ENCODE measurements at regions of chr1 and their contacts with region 1.

Region 1: GRCh38 chr1:2556277-2556677 is at the start of gene TNFRSF14:
- DNase-seq: peak; percentile 50 to 92 (median 72)
- ATAC-seq: peak; percentile 75
- H3K4me3 ChIP-seq: peak within 1 kb of the TSS; percentile 67 to 99
- H3K4me3 Mint-ChIP-seq: peak within 1 kb of the TSS; percentile 99
- H3K27ac ChIP-seq: peak within 1 kb of the TSS; percentile 89 to 98
- H3K27ac Mint-ChIP-seq: peak within 1 kb of the TSS; percentile 99
- H3K4me1 ChIP-seq: peaks cover 37% of the 10 kb centered on the region
- H3K4me1 Mint-ChIP-seq: peaks cover 42% of the 10 kb centered on the region
- H3K27me3 ChIP-seq: no peaks in the 10 kb centered on the region
- H3K27me3 Mint-ChIP-seq: no peaks in the 10 kb centered on the region
- CTCF ChIP-seq: peak; percentile 19
- total RNA-seq, gene TNFRSF14: 158 to 160 TPM

Region 2: DNA sequence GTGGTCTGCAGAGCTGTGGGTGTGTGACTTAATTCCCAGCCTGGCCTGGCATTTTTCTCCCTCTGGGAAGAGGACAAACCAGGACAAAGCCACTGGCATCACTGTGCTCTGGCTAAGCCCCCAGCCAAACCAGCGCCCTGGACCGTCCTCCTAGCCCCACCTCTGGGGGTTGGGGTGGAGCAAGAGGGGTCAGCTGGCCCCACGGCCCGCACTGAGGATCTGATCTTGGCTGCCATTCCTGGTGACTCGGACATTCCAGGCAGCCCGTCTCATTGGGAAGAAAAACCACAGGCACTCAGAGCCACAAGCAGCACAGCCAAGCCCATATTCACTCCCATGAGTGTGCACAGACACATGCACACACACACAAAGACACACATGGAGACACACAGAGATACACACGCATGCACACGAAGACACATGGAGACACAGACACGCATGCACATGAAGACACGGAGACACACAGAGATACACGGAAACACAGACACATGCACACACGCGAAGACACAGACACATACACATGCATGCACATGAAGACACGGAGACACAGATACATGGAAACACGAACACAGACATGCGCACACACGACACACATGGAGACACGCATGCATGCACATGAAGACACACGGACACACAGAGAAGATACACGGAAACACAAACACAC is 1195.6 kb before region 1 on chr1:
- CTCF ChIA-PET with region 1: no interaction called
- POLR2A ChIA-PET with region 1: no interaction called
- intact Hi-C with region 1: no loop called
- DNase-seq: no peak
- ATAC-seq: no peak
- H3K4me3 ChIP-seq: no peak overlapping the region
- H3K4me3 Mint-ChIP-seq: no peak overlapping the region
- H3K27ac ChIP-seq: no peak overlapping the region
- H3K27ac Mint-ChIP-seq: no peak overlapping the region
- H3K4me1 ChIP-seq: peaks cover 27% of the 10 kb centered on the region
- H3K4me1 Mint-ChIP-seq: peaks cover 24% of the 10 kb centered on the region
- H3K27me3 ChIP-seq: peaks cover 0 to 20% of the 10 kb centered on the region in 2 experiments
- H3K27me3 Mint-ChIP-seq: peaks cover 6% of the 10 kb centered on the region
- CTCF ChIP-seq: no peak

Region 3: GRCh38 chr1:2049718-2050427 is 506.4 kb before region 1 on chr1 and contains the start of gene PRKCZ:
- CTCF ChIA-PET with region 1: no interaction called
- POLR2A ChIA-PET with region 1: no interaction called
- intact Hi-C with region 1: loop called in 1 of 2 experiments (anchors 10 kb)
- DNase-seq: peak; percentile 90 to 98 (median 95)
- ATAC-seq: peak; percentile 97
- H3K4me3 ChIP-seq: peak within 1 kb of the TSS; percentile 76 to 88
- H3K4me3 Mint-ChIP-seq: peak within 1 kb of the TSS; percentile 80
- H3K27ac ChIP-seq: peak within 1 kb of the TSS; percentile 33 to 64
- H3K27ac Mint-ChIP-seq: no peak within 1 kb of the TSS
- H3K4me1 ChIP-seq: peaks cover 30% of the 10 kb centered on the region
- H3K4me1 Mint-ChIP-seq: peaks cover 28% of the 10 kb centered on the region
- H3K27me3 ChIP-seq: peaks cover 0 to 5% of the 10 kb centered on the region in 2 experiments
- H3K27me3 Mint-ChIP-seq: no peaks in the 10 kb centered on the region
- CTCF ChIP-seq: no peak
- total RNA-seq, gene PRKCZ: 17.1 to 19.6 TPM

Region 4: DNA sequence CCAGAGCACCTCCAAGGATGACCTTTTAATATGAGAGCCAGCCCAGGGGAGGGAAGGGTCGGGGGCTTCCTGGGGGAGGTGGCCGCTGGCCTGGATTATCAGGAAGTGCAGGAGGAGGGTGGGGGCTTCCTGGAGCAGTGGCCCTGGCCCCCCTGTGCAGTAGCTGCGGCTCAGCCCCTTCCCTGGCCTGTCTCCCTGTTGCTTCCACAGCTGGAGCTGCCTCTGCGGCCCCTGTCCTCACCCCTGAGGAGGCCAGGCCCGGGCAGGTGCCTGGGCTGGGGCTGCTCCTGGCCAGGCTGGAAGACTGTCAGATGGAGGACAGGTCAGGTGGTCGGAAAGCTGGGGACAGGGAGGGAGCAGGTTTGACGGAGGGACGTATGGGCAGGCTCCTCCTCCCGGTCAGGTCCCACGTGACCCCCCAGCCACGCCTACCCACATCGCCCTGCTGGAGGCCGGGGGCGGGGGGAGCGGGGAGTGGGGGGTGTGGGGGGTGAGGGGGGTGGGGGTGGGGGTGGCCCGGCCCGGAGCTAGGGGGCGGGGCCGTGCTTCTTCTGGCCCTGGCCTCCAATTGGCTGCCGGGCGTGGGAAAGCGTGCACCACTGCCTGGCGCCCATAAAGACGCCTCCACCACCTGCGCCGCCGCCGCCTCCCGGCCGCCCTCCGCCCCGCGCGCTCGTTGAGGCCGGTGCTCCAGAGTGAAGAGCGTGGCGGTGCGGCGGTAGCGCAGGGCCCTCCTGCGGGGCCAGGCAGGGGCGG is 10.3 kb before region 1 on chr1:
- CTCF ChIA-PET with region 1: interaction called, 17 read pairs
- POLR2A ChIA-PET with region 1: interaction called, 9 read pairs
- intact Hi-C with region 1: loop called in 1 of 2 experiments (anchors 1 kb)
- DNase-seq: peak; percentile 85 to 96 (median 89)
- ATAC-seq: peak; percentile 42
- H3K4me3 ChIP-seq: peak overlapping the region; percentile 87 to 91
- H3K4me3 Mint-ChIP-seq: peak overlapping the region; percentile 91
- H3K27ac ChIP-seq: peak overlapping the region; percentile 79 to 99
- H3K27ac Mint-ChIP-seq: peak overlapping the region; percentile 96
- H3K4me1 ChIP-seq: peaks cover 40% of the 10 kb centered on the region
- H3K4me1 Mint-ChIP-seq: peaks cover 31% of the 10 kb centered on the region
- H3K27me3 ChIP-seq: no peaks in the 10 kb centered on the region
- H3K27me3 Mint-ChIP-seq: no peaks in the 10 kb centered on the region
- CTCF ChIP-seq: no peak

Region 5: GRCh38 chr1:2586154-2587070 is 30.1 kb after region 1 on chr1 and contains the start of gene PRXL2B:
- CTCF ChIA-PET with region 1: interaction called, 28 read pairs
- POLR2A ChIA-PET with region 1: interaction called, 98 read pairs
- intact Hi-C with region 1: loop called (anchors 1 kb)
- DNase-seq: peak; percentile 94 to 99 (median 97)
- ATAC-seq: peak; percentile 69
- H3K4me3 ChIP-seq: peak within 1 kb of the TSS; percentile 79 to 95
- H3K4me3 Mint-ChIP-seq: peak within 1 kb of the TSS; percentile 93
- H3K27ac ChIP-seq: peak within 1 kb of the TSS; percentile 95 to 98
- H3K27ac Mint-ChIP-seq: peak within 1 kb of the TSS; percentile 99
- H3K4me1 ChIP-seq: peaks cover 37% of the 10 kb centered on the region
- H3K4me1 Mint-ChIP-seq: peaks cover 40% of the 10 kb centered on the region
- H3K27me3 ChIP-seq: no peaks in the 10 kb centered on the region
- H3K27me3 Mint-ChIP-seq: no peaks in the 10 kb centered on the region
- CTCF ChIP-seq: no peak
- total RNA-seq, gene PRXL2B: 13.5 to 15.9 TPM

Region 6: DNA sequence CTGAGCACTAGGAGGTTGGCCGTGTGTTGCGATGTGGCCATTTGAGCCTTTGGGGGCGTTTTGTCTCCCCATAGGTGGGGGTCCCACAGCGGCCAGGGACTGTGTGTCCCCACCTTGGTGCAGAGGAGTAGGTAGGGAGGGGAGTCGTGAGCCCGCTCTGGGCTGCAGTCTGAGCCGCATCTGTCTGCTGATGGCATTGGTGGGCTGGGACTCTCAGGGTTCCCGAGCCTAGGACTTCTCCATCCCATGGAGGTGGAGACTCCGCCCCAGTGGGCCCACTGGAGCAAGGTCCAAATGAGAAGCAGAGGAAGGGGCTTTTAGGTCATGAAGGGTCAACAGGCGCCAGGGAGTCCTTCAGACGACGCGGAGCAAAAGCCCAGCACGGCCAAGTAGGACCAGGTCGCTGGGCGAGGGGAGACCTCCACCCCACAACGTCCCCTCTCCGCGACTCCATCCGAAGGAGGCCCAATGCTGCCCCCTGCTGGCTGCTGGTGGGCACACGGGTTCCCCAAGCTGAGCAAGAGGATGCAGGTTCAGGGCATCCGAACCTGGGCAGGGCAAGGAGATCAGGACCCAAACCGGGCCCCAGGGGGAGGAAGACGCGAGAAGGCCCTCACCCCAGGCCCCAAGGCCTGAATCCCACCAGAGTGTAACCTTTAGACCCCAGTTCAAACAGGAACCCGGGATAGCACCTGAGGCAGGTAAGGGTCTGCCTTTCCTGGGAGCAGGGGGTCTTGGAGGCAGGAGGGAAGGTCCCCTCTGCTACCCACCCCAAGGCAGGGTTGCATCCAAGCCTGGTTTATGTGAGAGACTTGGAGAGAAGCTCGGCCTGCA is 230.3 kb after region 1 on chr1:
- CTCF ChIA-PET with region 1: interaction called, 4 read pairs
- POLR2A ChIA-PET with region 1: no interaction called
- intact Hi-C with region 1: loop called in 1 of 2 experiments (anchors 1 kb)
- DNase-seq: peak; percentile 52 to 87 (median 74)
- ATAC-seq: peak; percentile 69
- H3K4me3 ChIP-seq: no peak overlapping the region
- H3K4me3 Mint-ChIP-seq: no peak overlapping the region
- H3K27ac ChIP-seq: no peak overlapping the region
- H3K27ac Mint-ChIP-seq: no peak overlapping the region
- H3K4me1 ChIP-seq: peaks cover 9% of the 10 kb centered on the region
- H3K4me1 Mint-ChIP-seq: peaks cover 7% of the 10 kb centered on the region
- H3K27me3 ChIP-seq: peaks cover 10% of the 10 kb centered on the region in 2 experiments
- H3K27me3 Mint-ChIP-seq: peaks cover 22% of the 10 kb centered on the region
- CTCF ChIP-seq: peak; percentile 82